Ovary (tissue), 10 donors: ENCODE measurements at regions of chr5 and their contacts with region 1.

Region 1: DNA sequence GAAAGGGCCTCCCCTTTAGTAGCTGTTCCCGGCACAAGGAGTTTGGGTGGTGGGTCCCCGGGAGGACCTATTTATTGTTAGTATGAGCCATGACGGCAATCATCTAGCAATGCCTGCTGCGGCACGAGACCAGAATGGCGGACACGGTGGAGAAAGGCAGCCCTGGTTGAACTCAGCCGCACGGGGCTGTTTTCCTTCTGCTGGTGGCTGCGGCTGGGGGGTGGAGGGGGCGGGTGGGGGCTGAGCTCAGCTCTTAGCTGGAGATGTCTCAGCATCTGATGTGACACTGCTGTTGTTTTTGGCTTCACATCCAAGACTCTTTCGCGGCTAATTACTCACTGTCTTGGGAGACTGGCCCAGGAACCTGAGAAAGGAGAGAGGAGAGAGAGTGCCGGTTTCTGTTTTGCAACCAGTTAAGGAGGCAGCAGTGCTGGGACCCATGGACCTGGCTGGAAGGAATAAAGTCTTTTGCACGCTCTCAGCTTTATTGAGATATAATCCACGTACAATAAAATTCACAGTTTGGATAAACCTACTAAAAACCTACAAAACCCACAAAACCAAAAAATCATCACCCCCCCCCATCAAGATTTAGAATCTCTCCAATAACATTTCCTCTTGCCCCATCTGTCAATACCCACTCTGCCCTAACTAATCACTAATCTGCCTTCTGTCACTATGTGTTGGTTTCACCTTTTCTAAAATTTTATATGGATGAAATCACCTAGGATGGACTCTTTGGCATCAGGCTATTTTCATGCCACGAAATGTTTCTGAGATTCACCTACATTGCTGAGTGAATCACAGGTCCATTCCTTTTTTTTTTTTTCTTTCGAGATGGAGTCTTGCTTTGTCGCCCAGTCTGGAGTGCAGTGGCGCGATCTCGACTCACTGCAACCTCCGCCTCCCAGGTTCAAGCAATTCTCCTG is 81.8 kb upstream of the NEURL1B start:
- DNase-seq: peak; percentile 85 to 93 (median 87)
- H3K4me3 ChIP-seq: peak overlapping the region; percentile 29
- H3K27ac ChIP-seq: peak overlapping the region; percentile 16 to 70
- H3K4me1 ChIP-seq: peaks cover 24% of the 10 kb centered on the region
- H3K27me3 ChIP-seq: no peaks in the 10 kb centered on the region
- CTCF ChIP-seq: no peak
- EP300 ChIP-seq: no peak
- POLR2A ChIP-seq: no peak

Region 2: DNA sequence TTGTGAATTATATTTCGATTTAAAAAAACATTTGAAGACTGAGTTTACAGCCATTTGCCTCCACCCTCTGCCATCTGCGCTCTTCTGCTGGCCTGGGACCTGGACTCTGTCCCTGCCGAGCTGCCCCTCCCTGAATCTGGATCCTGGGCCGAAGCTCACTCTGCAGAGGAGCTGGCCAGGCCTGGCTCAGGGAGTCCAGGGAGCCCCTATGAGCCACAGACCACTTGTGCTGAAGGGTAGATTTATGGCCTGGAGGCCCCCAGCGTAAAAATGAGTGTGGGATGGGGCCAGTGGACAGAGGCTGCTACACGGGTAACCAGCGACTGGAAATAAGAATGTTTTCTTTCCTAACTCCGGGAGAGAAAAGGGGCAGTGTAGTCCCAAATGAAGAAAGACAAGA is 1010.0 kb before region 1 on chr5:
- intact Hi-C with region 1: no loop called
- DNase-seq: no peak
- H3K4me3 ChIP-seq: no peak overlapping the region
- H3K27ac ChIP-seq: no peak overlapping the region
- H3K4me1 ChIP-seq: no peaks in the 10 kb centered on the region
- H3K27me3 ChIP-seq: no peaks in the 10 kb centered on the region
- CTCF ChIP-seq: no peak
- EP300 ChIP-seq: no peak
- POLR2A ChIP-seq: no peak

Region 3: GRCh38 chr5:172502969-172503368 is 56.3 kb before region 1 on chr5:
- intact Hi-C with region 1: loop called in 1 of 4 experiments (anchors 10 kb)
- DNase-seq: peak in 4 of 5 donors; percentile 11 to 37 (median 19)
- H3K4me3 ChIP-seq: no peak overlapping the region
- H3K27ac ChIP-seq: peak overlapping the region in 1 of 2 donors; percentile 58
- H3K4me1 ChIP-seq: peaks cover 13% of the 10 kb centered on the region
- H3K27me3 ChIP-seq: no peaks in the 10 kb centered on the region
- CTCF ChIP-seq: no peak
- EP300 ChIP-seq: no peak
- POLR2A ChIP-seq: no peak

Region 4: GRCh38 chr5:172640822-172641358 is 81.6 kb after region 1 on chr5 and contains the start of gene NEURL1B:
- intact Hi-C with region 1: loop called in 2 of 4 experiments (anchors 10 kb)
- DNase-seq: peak; percentile 82 to 89 (median 87)
- H3K4me3 ChIP-seq: peak within 1 kb of the TSS; percentile 73
- H3K27ac ChIP-seq: peak within 1 kb of the TSS; percentile 38 to 89
- H3K4me1 ChIP-seq: peaks cover 4% of the 10 kb centered on the region
- H3K27me3 ChIP-seq: no peaks in the 10 kb centered on the region
- CTCF ChIP-seq: peak in 1 of 3 donors; percentile 19
- EP300 ChIP-seq: no peak
- POLR2A ChIP-seq: peak; percentile 44
- total RNA-seq, gene NEURL1B: 15.0 to 75.1 (median 36.3) TPM

Region 5: GRCh38 chr5:172697123-172698121 is 138.2 kb after region 1 on chr5:
- intact Hi-C with region 1: loop called in 1 of 4 experiments (anchors 5 kb)
- DNase-seq: peak; percentile 88 to 94 (median 91)
- H3K4me3 ChIP-seq: peak overlapping the region; percentile 48
- H3K27ac ChIP-seq: peak overlapping the region; percentile 5 to 61
- H3K4me1 ChIP-seq: peaks cover 28% of the 10 kb centered on the region
- H3K27me3 ChIP-seq: no peaks in the 10 kb centered on the region
- CTCF ChIP-seq: peak; percentile 83 to 94 (median 94)
- EP300 ChIP-seq: no peak
- POLR2A ChIP-seq: peak; percentile 40